Psoas muscle (tissue), 8 donors: ENCODE measurements at regions of chr15 and their contacts with region 1.

Region 1: DNA sequence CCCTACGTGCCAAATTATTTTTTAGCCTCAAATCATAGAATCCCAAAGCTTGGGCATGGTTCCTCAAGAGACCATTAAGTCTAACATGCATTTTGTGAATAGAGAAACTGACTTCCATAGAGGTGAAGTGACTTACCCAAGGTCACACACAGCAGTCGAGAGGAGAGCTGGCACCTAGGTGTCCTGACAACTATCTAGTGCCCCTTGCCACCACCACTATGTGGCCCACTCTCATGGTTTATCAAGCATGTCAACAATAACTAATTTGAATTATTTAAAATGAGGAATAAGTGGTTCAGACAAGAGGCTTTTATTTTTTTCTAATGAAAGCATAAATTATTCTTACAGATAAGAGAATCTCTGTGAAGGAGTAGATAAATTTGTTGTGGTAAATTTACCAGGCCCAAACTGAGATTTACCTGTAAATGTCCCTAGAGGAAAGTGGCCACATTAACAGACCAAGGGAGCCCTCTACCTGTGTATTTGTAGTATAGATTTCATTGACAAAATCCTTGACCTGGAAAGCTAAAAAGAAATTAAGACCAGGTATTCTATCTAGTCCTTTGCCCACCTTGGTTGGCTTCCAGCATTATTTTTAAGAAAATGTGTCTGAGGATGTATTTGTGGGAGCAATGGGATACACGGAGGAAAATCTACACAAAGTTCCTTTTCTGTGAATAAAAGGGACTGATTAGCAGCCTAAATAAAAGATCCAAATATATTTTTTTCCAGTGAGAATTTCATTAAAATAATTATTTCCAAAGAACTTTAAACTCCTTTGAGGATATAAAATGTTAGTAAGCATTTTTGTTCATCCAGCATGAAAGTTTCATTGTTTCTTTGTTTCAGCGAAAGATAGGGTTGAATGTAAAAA is 49.1 kb downstream of the IQCH start:
- DNase-seq: no peak
- ATAC-seq: peak; percentile 56 to 90 (median 76)
- H3K4me3 ChIP-seq: no peak overlapping the region
- H3K27ac ChIP-seq: no peak overlapping the region
- H3K4me1 ChIP-seq: peaks cover 5% of the 10 kb centered on the region
- H3K27me3 ChIP-seq: no peaks in the 10 kb centered on the region
- CTCF ChIP-seq: peak; percentile 70

Region 2: DNA sequence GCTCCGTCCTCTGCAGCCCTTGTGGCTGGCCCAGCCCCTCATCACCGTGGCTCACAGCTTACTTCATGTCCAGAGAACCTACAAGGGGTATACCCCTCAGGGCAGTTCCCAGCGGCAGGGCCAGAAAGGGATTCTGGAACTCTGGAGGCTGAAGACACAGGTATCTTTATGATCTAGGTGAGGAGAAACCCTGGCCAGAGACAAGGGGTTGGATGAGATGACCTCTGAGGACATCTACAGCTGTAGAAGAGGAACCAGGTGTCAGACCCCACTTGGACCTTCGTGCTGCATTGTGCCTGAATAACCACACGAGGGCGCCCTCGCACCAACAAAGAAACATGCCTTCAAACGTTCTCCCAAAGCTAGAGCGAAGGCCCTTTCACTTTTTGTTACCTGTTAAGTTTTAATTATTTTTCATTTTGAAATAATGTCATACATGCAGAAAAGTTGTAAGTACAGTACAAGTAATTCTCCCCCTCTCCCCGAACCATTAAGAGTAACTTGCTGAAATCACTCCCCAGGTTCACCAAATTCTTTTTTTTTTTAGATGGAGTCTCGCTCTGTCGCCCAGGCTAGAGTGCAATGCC is 357.1 kb before region 1 on chr15:
- intact Hi-C with region 1: loop called (anchors 1 kb)
- DNase-seq: peak; percentile 65 to 82
- ATAC-seq: peak; percentile 64 to 92 (median 80)
- H3K4me3 ChIP-seq: no peak overlapping the region
- H3K27ac ChIP-seq: no peak overlapping the region
- H3K4me1 ChIP-seq: peaks cover 4% of the 10 kb centered on the region
- H3K27me3 ChIP-seq: no peaks in the 10 kb centered on the region
- CTCF ChIP-seq: peak; percentile 98

Region 3: DNA sequence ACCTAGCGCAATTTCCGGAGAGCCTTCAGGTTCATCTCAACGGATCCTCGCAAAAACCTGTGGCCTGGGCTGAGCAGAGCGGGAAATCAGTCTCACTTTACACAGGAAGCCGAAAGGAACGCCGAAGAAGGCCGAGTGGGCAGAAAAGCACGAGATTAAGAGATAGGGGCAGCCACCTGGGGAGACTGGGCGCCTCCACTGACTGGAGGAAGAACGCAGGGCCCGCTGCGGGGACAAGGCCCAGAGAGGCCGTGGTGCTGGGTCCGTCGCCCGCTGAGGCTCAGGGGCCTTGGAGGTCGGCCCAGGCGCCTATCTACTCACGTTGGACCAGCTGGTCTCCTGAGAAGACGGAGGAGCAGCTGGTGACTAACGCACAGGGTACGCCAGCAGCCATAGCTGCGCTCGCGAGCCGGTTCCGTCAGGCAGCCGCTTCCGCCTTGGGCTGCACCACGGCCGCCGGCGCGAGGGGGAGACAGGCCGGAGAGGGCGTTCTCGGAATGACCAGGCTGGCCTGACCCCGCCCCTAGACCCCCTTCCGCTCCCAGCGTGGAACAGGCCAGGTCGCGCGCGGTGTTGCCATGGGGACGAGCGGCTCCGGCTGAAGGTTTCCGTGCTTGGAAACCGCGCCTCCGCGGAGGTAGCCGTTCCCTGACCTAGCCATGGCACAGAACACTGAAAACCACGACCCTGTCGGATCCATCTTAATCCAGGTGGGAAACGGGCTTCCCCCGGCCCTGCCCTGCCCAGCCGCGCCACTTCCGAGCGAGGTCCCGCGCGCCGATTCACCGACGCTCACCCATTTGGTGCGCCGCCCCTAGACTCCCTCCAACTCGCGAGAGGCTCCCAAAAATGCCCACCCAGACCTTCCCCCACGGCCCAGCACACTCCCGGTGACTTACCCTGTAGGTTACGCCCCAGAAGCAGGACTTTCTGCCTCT is 49.2 kb before region 1 on chr15 and contains the starts of genes AAGAB and IQCH:
- intact Hi-C with region 1: loop called in 1 of 2 experiments (anchors 5 kb)
- DNase-seq: peak; percentile 99
- ATAC-seq: peak; percentile 96 to 99 (median 98)
- H3K4me3 ChIP-seq: peak within 1 kb of the TSS; percentile 87
- H3K27ac ChIP-seq: peak within 1 kb of the TSS; percentile 94
- H3K4me1 ChIP-seq: peaks cover 18% of the 10 kb centered on the region
- H3K27me3 ChIP-seq: no peaks in the 10 kb centered on the region
- CTCF ChIP-seq: no peak
- total RNA-seq, gene AAGAB: 34.3 to 46.1 (median 42.7) TPM
- total RNA-seq, gene IQCH: 0.37 to 1.0 (median 0.75) TPM

Region 4: GRCh38 chr15:67335534-67336221 is 32.0 kb after region 1 on chr15:
- intact Hi-C with region 1: no loop called
- DNase-seq: no peak
- ATAC-seq: no peak
- H3K4me3 ChIP-seq: no peak overlapping the region
- H3K27ac ChIP-seq: no peak overlapping the region
- H3K4me1 ChIP-seq: no peaks in the 10 kb centered on the region
- H3K27me3 ChIP-seq: peaks cover 0 to 4% (median 0%) of the 10 kb centered on the region in 3 donors
- CTCF ChIP-seq: no peak